HepG2 (cell line): ENCODE measurements at regions of chr10 and their contacts with region 1.

Region 1: GRCh38 chr10:119207367-119207668 is at the start of gene GRK5:
- DNase-seq: peak; percentile 90
- ATAC-seq: peak; percentile 86
- H3K4me3 ChIP-seq: peak within 1 kb of the TSS; percentile 75 to 97 (median 95)
- H3K27ac ChIP-seq: peak within 1 kb of the TSS; percentile 93
- H3K4me1 ChIP-seq: peaks cover 59% of the 10 kb centered on the region
- H3K27me3 ChIP-seq: no peaks in the 10 kb centered on the region; a peak in 2 of 5 replicates
- CTCF ChIP-seq: no peak
- EP300 ChIP-seq: no peak
- POLR2A ChIP-seq: peak in 1 of 2 experiments; percentile 60; a peak in 2 of 4 replicates
- RAD21 ChIP-seq: no peak
- total RNA-seq, gene GRK5: 12.6 and 12.8 TPM in 2 replicates

Region 2: GRCh38 chr10:119222537-119222936 is 15.2 kb after region 1 on chr10:
- CTCF ChIA-PET with region 1: no interaction called
- POLR2A ChIA-PET with region 1: interaction called, 44 read pairs
- in situ Hi-C with region 1: no loop called
- intact Hi-C with region 1: no loop called
- DNase-seq: peak; percentile 77
- ATAC-seq: peak; percentile 87
- H3K4me3 ChIP-seq: peak overlapping the region; percentile 40 to 69 (median 42); a peak in 5 of 6 replicates
- H3K27ac ChIP-seq: peak overlapping the region; percentile 60
- H3K4me1 ChIP-seq: peaks cover 50% of the 10 kb centered on the region
- H3K27me3 ChIP-seq: no peaks in the 10 kb centered on the region
- CTCF ChIP-seq: no peak
- EP300 ChIP-seq: no peak
- POLR2A ChIP-seq: no peak
- RAD21 ChIP-seq: no peak

Region 3: DNA sequence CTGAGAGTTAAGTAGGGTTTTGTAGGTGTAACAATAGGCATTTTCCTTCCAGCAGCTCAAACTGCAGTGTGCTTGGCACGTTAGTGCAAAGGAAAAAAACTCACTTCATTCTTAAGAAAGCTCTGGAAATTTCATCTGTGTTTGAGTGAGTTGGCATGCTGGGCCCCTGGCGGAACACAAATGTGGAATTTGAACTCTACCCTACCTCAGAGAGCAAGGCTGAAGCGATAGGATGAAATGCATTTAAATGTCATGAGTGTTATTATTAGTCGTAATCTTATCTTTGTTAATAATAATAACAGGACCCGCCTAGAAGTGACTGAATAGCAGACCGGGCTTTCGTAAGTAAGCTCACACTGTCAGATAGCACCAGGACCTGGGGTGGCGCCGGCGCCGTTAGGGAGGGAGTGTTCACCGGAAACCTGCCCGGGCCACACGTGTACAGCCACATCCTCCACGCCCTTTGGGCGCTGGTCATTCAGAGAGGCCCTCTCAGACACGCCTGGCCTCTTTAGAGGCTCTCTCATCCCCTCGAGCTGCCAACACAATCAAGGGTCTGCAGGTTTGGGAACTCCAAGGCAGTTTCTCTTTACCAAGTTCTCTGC is 63.5 kb after region 1 on chr10:
- CTCF ChIA-PET with region 1: interaction called, 6 read pairs
- POLR2A ChIA-PET with region 1: interaction called, 51 read pairs
- in situ Hi-C with region 1: no loop called
- intact Hi-C with region 1: loop called (anchors 1 kb)
- DNase-seq: peak; percentile 75
- ATAC-seq: peak; percentile 89
- H3K4me3 ChIP-seq: peak overlapping the region; percentile 12 to 52 (median 34); a peak in 5 of 6 replicates
- H3K27ac ChIP-seq: peak overlapping the region; percentile 83
- H3K4me1 ChIP-seq: peaks cover 63% of the 10 kb centered on the region
- H3K27me3 ChIP-seq: no peaks in the 10 kb centered on the region
- CTCF ChIP-seq: no peak; the same call in 1 of the 2 replicates
- EP300 ChIP-seq: no peak; a peak in 1 of 4 replicates
- POLR2A ChIP-seq: peak; percentile 51 to 54; a peak in 3 of 4 replicates
- RAD21 ChIP-seq: no peak; the same call in 1 of the 2 replicates

Region 4: GRCh38 chr10:119320981-119321380 is 113.7 kb after region 1 on chr10:
- CTCF ChIA-PET with region 1: no interaction called
- POLR2A ChIA-PET with region 1: interaction called, 28 read pairs
- in situ Hi-C with region 1: no loop called
- intact Hi-C with region 1: loop called (anchors 2 kb)
- DNase-seq: no peak
- ATAC-seq: no peak
- H3K4me3 ChIP-seq: no peak overlapping the region
- H3K27ac ChIP-seq: no peak overlapping the region
- H3K4me1 ChIP-seq: peaks cover 87% of the 10 kb centered on the region
- H3K27me3 ChIP-seq: no peaks in the 10 kb centered on the region
- CTCF ChIP-seq: no peak
- EP300 ChIP-seq: no peak
- POLR2A ChIP-seq: no peak
- RAD21 ChIP-seq: no peak

Region 5: DNA sequence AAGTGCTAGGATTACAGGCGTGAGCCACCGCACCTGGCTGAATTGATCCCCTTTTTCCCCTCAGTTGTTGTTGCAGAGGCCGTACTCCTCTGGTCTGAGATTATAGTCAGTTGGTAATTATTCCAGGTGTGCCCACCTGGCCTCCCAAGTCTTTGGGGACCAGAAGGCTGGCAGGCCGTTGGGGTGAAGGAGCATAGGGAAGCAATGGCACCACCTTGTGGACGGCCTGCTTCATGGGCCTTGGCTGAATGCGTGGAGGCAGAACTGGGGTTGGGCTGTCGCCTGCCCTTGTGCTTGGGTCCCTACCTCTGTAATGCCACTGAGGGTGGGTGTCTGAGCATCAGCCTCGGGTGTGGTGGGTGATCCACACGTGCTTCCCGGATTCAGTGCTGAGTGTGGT is 209.5 kb after region 1 on chr10:
- CTCF ChIA-PET with region 1: interaction called, 14 read pairs
- POLR2A ChIA-PET with region 1: interaction called, 3 read pairs
- in situ Hi-C with region 1: no loop called
- intact Hi-C with region 1: loop called (anchors 1 kb)
- DNase-seq: peak; percentile 46
- ATAC-seq: peak; percentile 80
- H3K4me3 ChIP-seq: no peak overlapping the region
- H3K27ac ChIP-seq: no peak overlapping the region
- H3K4me1 ChIP-seq: peaks cover 16% of the 10 kb centered on the region
- H3K27me3 ChIP-seq: no peaks in the 10 kb centered on the region
- CTCF ChIP-seq: peak; percentile 97
- EP300 ChIP-seq: no peak
- POLR2A ChIP-seq: no peak
- RAD21 ChIP-seq: peak; percentile 93